ENCODE measurements at regions of chr2 and their contacts with region 1.

Region 1: GRCh38 chr2:176653479-176654443 is 384.5 kb downstream of the MTX2 start:
- DNase-seq: peak in 4 of 9 donors; percentile 23 to 26 (median 23)
- ATAC-seq: peak; percentile 49
- H3K4me3 ChIP-seq: no peak overlapping the region
- H3K4me3 Mint-ChIP-seq: no peak overlapping the region
- H3K27ac ChIP-seq: no peak overlapping the region
- H3K27ac Mint-ChIP-seq: no peak overlapping the region
- H3K4me1 ChIP-seq: no peaks in the 10 kb centered on the region
- H3K4me1 Mint-ChIP-seq: peaks cover 0 to 14% (median 6%) of the 10 kb centered on the region in 7 donors
- H3K27me3 ChIP-seq: no peaks in the 10 kb centered on the region
- H3K27me3 Mint-ChIP-seq: peaks cover 45 to 67% (median 65%) of the 10 kb centered on the region in 5 donors

Region 2: DNA sequence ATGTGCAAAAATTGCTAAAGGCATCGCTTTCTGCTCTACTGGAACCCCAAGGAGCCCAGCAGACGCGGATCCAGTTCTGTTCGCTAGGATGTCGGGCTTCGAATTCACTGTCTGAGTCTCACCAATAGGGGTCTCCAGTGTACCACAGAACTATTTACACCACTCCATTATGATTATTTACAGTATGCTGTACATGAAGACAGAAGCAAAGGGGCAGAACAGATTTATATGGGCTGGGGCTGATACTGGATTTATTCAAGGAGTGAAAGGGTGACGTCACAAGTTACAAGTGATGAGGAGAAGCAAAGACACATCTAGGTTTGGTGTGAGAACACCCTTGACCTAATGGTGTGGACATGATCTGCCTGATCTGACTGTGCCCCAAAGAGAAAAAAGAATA is 1286.9 kb before region 1 on chr2:
- CTCF ChIA-PET with region 1: no interaction called
- POLR2A ChIA-PET with region 1: no interaction called
- intact Hi-C with region 1: loop called in 1 of 2 experiments (anchors 5 kb)
- DNase-seq: peak in 3 of 9 donors; percentile 6 to 22 (median 14)
- ATAC-seq: peak; percentile 76
- H3K4me3 ChIP-seq: no peak overlapping the region
- H3K4me3 Mint-ChIP-seq: no peak overlapping the region
- H3K27ac ChIP-seq: no peak overlapping the region
- H3K27ac Mint-ChIP-seq: no peak overlapping the region
- H3K4me1 ChIP-seq: no peaks in the 10 kb centered on the region
- H3K4me1 Mint-ChIP-seq: no peaks in the 10 kb centered on the region
- H3K27me3 ChIP-seq: peaks cover 0 to 5% of the 10 kb centered on the region in 2 donors
- H3K27me3 Mint-ChIP-seq: peaks cover 13 to 32% (median 20%) of the 10 kb centered on the region in 5 donors

Region 3: DNA sequence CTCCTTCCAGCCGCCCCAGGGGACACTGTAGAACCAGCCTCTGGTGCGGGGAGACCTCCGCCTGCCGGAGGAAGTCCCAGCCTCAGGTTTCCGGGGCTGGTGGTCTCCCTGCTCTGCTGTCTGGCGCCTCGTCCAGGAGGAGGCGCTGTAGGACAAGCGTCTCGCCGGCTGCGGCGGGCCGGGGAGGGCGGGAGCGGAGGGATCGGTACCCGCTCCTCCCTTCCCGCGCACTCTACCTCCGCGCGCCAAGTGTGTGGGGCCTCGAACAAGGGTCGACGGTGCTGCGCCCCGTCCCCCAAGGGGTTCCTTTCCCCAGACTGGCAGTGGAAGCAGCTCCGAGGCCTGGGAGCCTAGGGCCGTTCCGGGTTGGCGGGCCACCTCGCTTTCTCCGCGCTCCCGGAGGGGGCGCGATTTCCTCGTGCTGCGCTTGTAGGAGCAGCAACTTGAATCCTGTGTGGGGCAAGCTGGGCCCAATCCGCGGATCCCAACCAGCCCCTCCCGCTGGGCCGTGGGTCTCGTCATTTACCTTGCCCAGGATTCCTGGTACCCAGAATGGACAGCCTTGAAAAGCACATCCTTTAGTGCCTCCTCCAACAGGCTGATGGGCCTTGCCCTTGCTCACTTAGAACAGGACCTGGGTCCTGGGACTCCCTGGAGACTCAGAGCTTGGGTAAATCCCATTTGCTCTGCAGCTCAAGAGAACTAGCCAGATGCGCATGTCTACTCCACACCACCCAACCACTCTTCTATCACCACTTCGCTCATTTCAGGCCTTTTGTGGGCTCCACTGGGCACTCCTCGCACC is 513.0 kb before region 1 on chr2:
- CTCF ChIA-PET with region 1: interaction called, 4 read pairs
- POLR2A ChIA-PET with region 1: no interaction called
- intact Hi-C with region 1: loop called in 1 of 2 experiments (anchors 1 kb)
- DNase-seq: peak; percentile 35 to 76 (median 61)
- ATAC-seq: peak; percentile 87
- H3K4me3 ChIP-seq: peak overlapping the region; percentile 36
- H3K4me3 Mint-ChIP-seq: peak overlapping the region in 9 of 10 donors; percentile 23 to 78 (median 43)
- H3K27ac ChIP-seq: no peak overlapping the region
- H3K27ac Mint-ChIP-seq: peak overlapping the region in 1 of 9 donors; percentile 0
- H3K4me1 ChIP-seq: peaks cover 3 to 26% of the 10 kb centered on the region in 2 donors
- H3K4me1 Mint-ChIP-seq: peaks cover 7 to 46% (median 36%) of the 10 kb centered on the region in 7 donors
- H3K27me3 ChIP-seq: peaks cover 16 to 51% of the 10 kb centered on the region in 2 donors
- H3K27me3 Mint-ChIP-seq: peaks cover 83 to 91% (median 88%) of the 10 kb centered on the region in 5 donors

Region 4: GRCh38 chr2:176628438-176628837 is 25.3 kb before region 1 on chr2:
- CTCF ChIA-PET with region 1: no interaction called
- POLR2A ChIA-PET with region 1: no interaction called
- intact Hi-C with region 1: no loop called
- DNase-seq: no peak
- ATAC-seq: no peak
- H3K4me3 ChIP-seq: no peak overlapping the region
- H3K4me3 Mint-ChIP-seq: no peak overlapping the region
- H3K27ac ChIP-seq: no peak overlapping the region
- H3K27ac Mint-ChIP-seq: no peak overlapping the region
- H3K4me1 ChIP-seq: no peaks in the 10 kb centered on the region
- H3K4me1 Mint-ChIP-seq: no peaks in the 10 kb centered on the region
- H3K27me3 ChIP-seq: no peaks in the 10 kb centered on the region
- H3K27me3 Mint-ChIP-seq: peaks cover 50 to 71% (median 59%) of the 10 kb centered on the region in 5 donors

Region 5: GRCh38 chr2:176664478-176664877 is 10.7 kb after region 1 on chr2:
- CTCF ChIA-PET with region 1: interaction called, 10 read pairs
- POLR2A ChIA-PET with region 1: no interaction called
- intact Hi-C with region 1: no loop called
- DNase-seq: no peak
- ATAC-seq: no peak
- H3K4me3 ChIP-seq: no peak overlapping the region
- H3K4me3 Mint-ChIP-seq: no peak overlapping the region
- H3K27ac ChIP-seq: no peak overlapping the region
- H3K27ac Mint-ChIP-seq: no peak overlapping the region
- H3K4me1 ChIP-seq: no peaks in the 10 kb centered on the region
- H3K4me1 Mint-ChIP-seq: no peaks in the 10 kb centered on the region
- H3K27me3 ChIP-seq: no peaks in the 10 kb centered on the region
- H3K27me3 Mint-ChIP-seq: peaks cover 35 to 60% (median 46%) of the 10 kb centered on the region in 5 donors

Region 6: GRCh38 chr2:176814306-176815052 is 160.7 kb after region 1 on chr2:
- CTCF ChIA-PET with region 1: no interaction called
- POLR2A ChIA-PET with region 1: interaction called, 6 read pairs
- intact Hi-C with region 1: loop called (anchors 2 to 5 kb)
- DNase-seq: peak in 5 of 9 donors; percentile 34 to 47 (median 44)
- ATAC-seq: peak; percentile 80
- H3K4me3 ChIP-seq: no peak overlapping the region
- H3K4me3 Mint-ChIP-seq: peak overlapping the region in 7 of 10 donors; percentile 7 to 62 (median 24)
- H3K27ac ChIP-seq: no peak overlapping the region
- H3K27ac Mint-ChIP-seq: no peak overlapping the region
- H3K4me1 ChIP-seq: peaks cover 3 to 7% of the 10 kb centered on the region in 2 donors
- H3K4me1 Mint-ChIP-seq: peaks cover 10 to 26% (median 19%) of the 10 kb centered on the region in 7 donors
- H3K27me3 ChIP-seq: no peaks in the 10 kb centered on the region
- H3K27me3 Mint-ChIP-seq: peaks cover 0 to 7% (median 0%) of the 10 kb centered on the region in 5 donors

Region 7: GRCh38 chr2:177419274-177419673 is 765.5 kb after region 1 on chr2:
- CTCF ChIA-PET with region 1: no interaction called
- POLR2A ChIA-PET with region 1: no interaction called
- intact Hi-C with region 1: loop called in 1 of 2 experiments (anchors 10 kb)
- DNase-seq: no peak
- ATAC-seq: no peak
- H3K4me3 ChIP-seq: no peak overlapping the region
- H3K4me3 Mint-ChIP-seq: no peak overlapping the region
- H3K27ac ChIP-seq: no peak overlapping the region
- H3K27ac Mint-ChIP-seq: peak overlapping the region in 1 of 9 donors; percentile 22
- H3K4me1 ChIP-seq: no peaks in the 10 kb centered on the region
- H3K4me1 Mint-ChIP-seq: peaks cover 5 to 54% (median 27%) of the 10 kb centered on the region in 7 donors
- H3K27me3 ChIP-seq: no peaks in the 10 kb centered on the region
- H3K27me3 Mint-ChIP-seq: no peaks in the 10 kb centered on the region